MCF 10A (cell line): ENCODE measurements at regions of chr2 and their contacts with region 1.

Region 1: GRCh38 chr2:143162123-143162837 is 33.1 kb downstream of the ARHGAP15 start:
- DNase-seq: peak; percentile 56
- H3K4me3 Mint-ChIP-seq: no peak overlapping the region
- H3K27ac Mint-ChIP-seq: no peak overlapping the region
- H3K4me1 Mint-ChIP-seq: no peaks in the 10 kb centered on the region
- H3K27me3 Mint-ChIP-seq: peaks cover 12% of the 10 kb centered on the region
- CTCF ChIP-seq: peak; percentile 80

Region 2: GRCh38 chr2:143034292-143035074 is 127.8 kb before region 1 on chr2:
- CTCF ChIA-PET with region 1: interaction called, 6 read pairs
- POLR2A ChIA-PET with region 1: no interaction called
- intact Hi-C with region 1: loop called (anchors 1 kb)
- DNase-seq: peak; percentile 82
- H3K4me3 Mint-ChIP-seq: no peak overlapping the region
- H3K27ac Mint-ChIP-seq: no peak overlapping the region
- H3K4me1 Mint-ChIP-seq: no peaks in the 10 kb centered on the region
- H3K27me3 Mint-ChIP-seq: no peaks in the 10 kb centered on the region
- CTCF ChIP-seq: peak; percentile 79

Region 3: DNA sequence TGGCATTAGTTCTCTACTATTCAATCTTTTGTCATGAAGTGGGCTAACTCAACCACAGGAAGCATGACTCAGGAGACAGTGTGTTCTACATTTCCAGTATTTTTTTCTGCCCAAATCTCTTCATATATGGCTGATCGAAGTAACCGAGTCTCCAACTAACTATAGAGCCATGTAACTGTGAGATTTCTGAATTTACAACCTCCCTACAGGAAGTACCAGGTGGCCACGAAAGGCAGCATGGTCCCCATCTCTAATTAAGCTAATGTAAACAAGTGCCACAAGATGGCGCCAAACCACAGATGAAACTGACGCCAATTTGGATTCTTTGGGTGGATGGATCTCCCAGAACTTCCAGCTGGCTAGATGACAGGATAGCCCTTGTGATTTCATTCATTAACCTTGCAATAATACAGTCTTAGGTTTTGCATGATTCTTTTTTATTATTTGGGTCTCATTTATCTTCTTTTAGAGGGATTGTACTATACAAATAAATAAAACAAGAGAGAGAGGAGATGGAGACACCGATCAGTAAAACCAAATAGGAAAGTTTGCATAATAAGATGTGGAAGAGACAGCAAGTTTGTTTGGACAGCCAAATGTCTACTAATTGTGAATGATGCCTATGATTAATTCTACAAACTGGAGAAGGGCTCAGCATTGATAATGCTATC is 51.4 kb before region 1 on chr2:
- CTCF ChIA-PET with region 1: interaction called, 20 read pairs
- POLR2A ChIA-PET with region 1: no interaction called
- intact Hi-C with region 1: no loop called
- DNase-seq: peak; percentile 86
- H3K4me3 Mint-ChIP-seq: no peak overlapping the region
- H3K27ac Mint-ChIP-seq: no peak overlapping the region
- H3K4me1 Mint-ChIP-seq: peaks cover 8% of the 10 kb centered on the region
- H3K27me3 Mint-ChIP-seq: no peaks in the 10 kb centered on the region
- CTCF ChIP-seq: peak; percentile 77

Region 4: GRCh38 chr2:143183804-143184463 is 21.7 kb after region 1 on chr2:
- CTCF ChIA-PET with region 1: interaction called, 14 read pairs
- POLR2A ChIA-PET with region 1: no interaction called
- intact Hi-C with region 1: no loop called
- DNase-seq: no peak
- H3K4me3 Mint-ChIP-seq: no peak overlapping the region
- H3K27ac Mint-ChIP-seq: no peak overlapping the region
- H3K4me1 Mint-ChIP-seq: no peaks in the 10 kb centered on the region
- H3K27me3 Mint-ChIP-seq: no peaks in the 10 kb centered on the region
- CTCF ChIP-seq: no peak

Region 5: DNA sequence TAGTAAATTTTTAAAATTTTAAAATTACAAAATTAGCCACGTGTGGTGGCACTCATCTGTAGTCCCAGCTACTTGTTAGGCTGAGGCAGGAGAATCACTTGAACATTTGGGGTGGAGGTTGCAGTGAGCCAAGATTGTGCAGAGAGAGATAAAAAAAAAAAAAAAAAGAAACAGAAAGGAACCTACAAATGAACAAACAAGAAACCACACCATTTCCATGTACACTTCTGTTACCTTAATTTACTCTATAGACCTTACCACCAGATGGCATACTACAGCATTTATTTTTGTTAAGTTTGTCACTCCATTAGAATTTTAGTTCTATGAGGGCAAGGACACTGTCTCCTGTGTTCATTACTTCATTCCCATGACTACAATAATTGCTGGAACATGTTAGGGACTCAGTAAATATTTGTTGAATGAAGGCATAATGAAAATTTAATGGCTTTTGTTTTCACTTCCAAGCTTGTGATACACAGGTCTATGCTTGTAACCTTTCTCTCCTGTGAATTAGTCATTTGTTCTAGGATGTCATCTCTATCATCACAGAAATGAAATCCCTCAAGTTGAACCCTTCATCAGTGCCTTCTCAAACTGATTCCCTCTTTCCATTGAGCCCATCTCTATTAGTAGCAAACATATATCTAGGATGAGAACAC is 43.0 kb after region 1 on chr2:
- CTCF ChIA-PET with region 1: interaction called, 19 read pairs
- POLR2A ChIA-PET with region 1: no interaction called
- intact Hi-C with region 1: loop called (anchors 2 kb)
- DNase-seq: peak; percentile 9
- H3K4me3 Mint-ChIP-seq: no peak overlapping the region
- H3K27ac Mint-ChIP-seq: no peak overlapping the region
- H3K4me1 Mint-ChIP-seq: peaks cover 5% of the 10 kb centered on the region
- H3K27me3 Mint-ChIP-seq: no peaks in the 10 kb centered on the region
- CTCF ChIP-seq: peak; percentile 43

Region 6: GRCh38 chr2:143217512-143218115 is 55.3 kb after region 1 on chr2:
- CTCF ChIA-PET with region 1: interaction called, 53 read pairs
- POLR2A ChIA-PET with region 1: no interaction called
- intact Hi-C with region 1: loop called (anchors 1 kb)
- DNase-seq: no peak
- H3K4me3 Mint-ChIP-seq: no peak overlapping the region
- H3K27ac Mint-ChIP-seq: no peak overlapping the region
- H3K4me1 Mint-ChIP-seq: no peaks in the 10 kb centered on the region
- H3K27me3 Mint-ChIP-seq: no peaks in the 10 kb centered on the region
- CTCF ChIP-seq: no peak

Region 7: DNA sequence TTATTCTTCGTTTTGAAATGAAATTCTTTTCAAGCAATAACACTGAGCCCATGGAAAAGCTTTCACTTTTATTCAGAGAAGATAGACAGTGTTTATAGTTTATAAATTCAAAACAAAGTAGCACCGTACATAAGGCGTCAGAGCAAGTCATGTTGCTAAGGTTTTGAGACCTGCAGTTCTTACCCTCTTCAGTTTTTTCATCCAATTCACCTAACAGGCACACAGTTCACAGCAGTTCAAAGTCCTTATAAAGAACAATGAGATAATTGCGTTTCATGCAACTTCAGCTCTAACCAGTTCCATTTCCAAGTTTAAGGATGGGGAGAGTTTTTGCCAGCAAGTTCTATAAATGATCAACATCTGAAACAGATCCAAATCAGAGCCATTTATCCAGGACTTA is 63.7 kb after region 1 on chr2:
- CTCF ChIA-PET with region 1: interaction called, 53 read pairs
- POLR2A ChIA-PET with region 1: no interaction called
- intact Hi-C with region 1: loop called (anchors 1 kb)
- DNase-seq: no peak
- H3K4me3 Mint-ChIP-seq: no peak overlapping the region
- H3K27ac Mint-ChIP-seq: no peak overlapping the region
- H3K4me1 Mint-ChIP-seq: no peaks in the 10 kb centered on the region
- H3K27me3 Mint-ChIP-seq: no peaks in the 10 kb centered on the region
- CTCF ChIP-seq: no peak